ENCODE measurements at regions of chr13 and their contacts with region 1.

Region 1: GRCh38 chr13:104773775-104774174 is 1707.6 kb upstream of the SLC10A2 start:
- DNase-seq: peak; percentile 68
- H3K4me3 Mint-ChIP-seq: no peak overlapping the region
- H3K27ac Mint-ChIP-seq: no peak overlapping the region
- H3K4me1 Mint-ChIP-seq: peaks cover 11% of the 10 kb centered on the region
- H3K27me3 Mint-ChIP-seq: no peaks in the 10 kb centered on the region
- CTCF ChIP-seq: peak; percentile 62

Region 2: GRCh38 chr13:103188713-103189326 is 1585.0 kb before region 1 on chr13:
- CTCF ChIA-PET with region 1: no interaction called
- POLR2A ChIA-PET with region 1: no interaction called
- intact Hi-C with region 1: loop called (anchors 10 kb)
- DNase-seq: peak; percentile 48
- H3K4me3 Mint-ChIP-seq: no peak overlapping the region
- H3K27ac Mint-ChIP-seq: no peak overlapping the region
- H3K4me1 Mint-ChIP-seq: peaks cover 6% of the 10 kb centered on the region
- H3K27me3 Mint-ChIP-seq: no peaks in the 10 kb centered on the region
- CTCF ChIP-seq: peak; percentile 54

Region 3: GRCh38 chr13:104318121-104318520 is 455.7 kb before region 1 on chr13:
- CTCF ChIA-PET with region 1: no interaction called
- POLR2A ChIA-PET with region 1: no interaction called
- intact Hi-C with region 1: loop called (anchors 10 kb)
- DNase-seq: peak; percentile 43
- H3K4me3 Mint-ChIP-seq: no peak overlapping the region
- H3K27ac Mint-ChIP-seq: no peak overlapping the region
- H3K4me1 Mint-ChIP-seq: peaks cover 13% of the 10 kb centered on the region
- H3K27me3 Mint-ChIP-seq: no peaks in the 10 kb centered on the region
- CTCF ChIP-seq: peak; percentile 44

Region 4: GRCh38 chr13:104949840-104950740 is 176.3 kb after region 1 on chr13:
- CTCF ChIA-PET with region 1: no interaction called
- POLR2A ChIA-PET with region 1: no interaction called
- intact Hi-C with region 1: loop called (anchors 10 kb)
- DNase-seq: no peak
- H3K4me3 Mint-ChIP-seq: no peak overlapping the region
- H3K27ac Mint-ChIP-seq: no peak overlapping the region
- H3K4me1 Mint-ChIP-seq: peaks cover 15% of the 10 kb centered on the region
- H3K27me3 Mint-ChIP-seq: no peaks in the 10 kb centered on the region
- CTCF ChIP-seq: no peak

Region 5: GRCh38 chr13:106047859-106048258 is 1274.1 kb after region 1 on chr13:
- CTCF ChIA-PET with region 1: no interaction called
- POLR2A ChIA-PET with region 1: no interaction called
- intact Hi-C with region 1: loop called (anchors 10 kb)
- DNase-seq: no peak
- H3K4me3 Mint-ChIP-seq: no peak overlapping the region
- H3K27ac Mint-ChIP-seq: no peak overlapping the region
- H3K4me1 Mint-ChIP-seq: no peaks in the 10 kb centered on the region
- H3K27me3 Mint-ChIP-seq: no peaks in the 10 kb centered on the region
- CTCF ChIP-seq: no peak

Measured in MCF 10A (cell line).